ENCODE measurements at regions of chr4 and their contacts with region 1.

Region 1: DNA sequence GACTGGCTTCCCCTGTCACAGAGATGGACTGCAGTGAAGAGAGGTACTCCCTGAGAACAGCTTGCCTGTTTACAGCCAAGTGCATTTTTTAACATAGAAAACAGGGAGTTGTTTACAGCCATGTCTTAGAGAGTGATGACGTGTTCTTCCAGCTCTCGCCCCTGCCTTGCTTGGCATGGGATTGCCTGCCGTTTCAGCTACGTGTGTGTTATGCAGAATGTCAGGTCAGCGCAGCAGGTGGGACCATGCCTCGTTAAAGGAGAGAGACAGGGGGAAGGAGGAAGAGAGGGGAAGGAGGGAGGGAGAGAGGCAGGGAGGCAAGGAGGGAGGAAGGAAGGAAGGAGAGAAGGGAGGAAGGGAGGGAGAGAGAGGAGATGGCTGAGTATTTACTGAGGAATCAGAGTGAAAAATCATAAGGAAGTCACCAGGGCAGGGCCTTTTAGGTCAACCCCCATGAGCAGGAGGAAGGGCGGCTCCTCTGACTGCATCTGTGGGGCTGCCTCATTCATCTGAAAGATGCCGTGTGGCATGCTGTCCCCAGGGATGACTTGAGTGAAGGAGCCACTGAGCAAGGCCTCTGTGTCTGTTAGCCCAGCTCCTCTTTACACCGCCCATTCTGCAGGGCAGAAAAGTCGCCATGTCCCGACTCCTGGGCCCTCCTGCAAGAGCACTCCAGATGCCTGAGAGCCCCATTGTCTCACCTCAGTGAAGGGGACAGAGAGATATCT is 139.7 kb upstream of the PSAPL1 start:
- DNase-seq: no peak
- H3K27ac ChIP-seq: no peak overlapping the region
- CTCF ChIP-seq: no peak

Region 2: DNA sequence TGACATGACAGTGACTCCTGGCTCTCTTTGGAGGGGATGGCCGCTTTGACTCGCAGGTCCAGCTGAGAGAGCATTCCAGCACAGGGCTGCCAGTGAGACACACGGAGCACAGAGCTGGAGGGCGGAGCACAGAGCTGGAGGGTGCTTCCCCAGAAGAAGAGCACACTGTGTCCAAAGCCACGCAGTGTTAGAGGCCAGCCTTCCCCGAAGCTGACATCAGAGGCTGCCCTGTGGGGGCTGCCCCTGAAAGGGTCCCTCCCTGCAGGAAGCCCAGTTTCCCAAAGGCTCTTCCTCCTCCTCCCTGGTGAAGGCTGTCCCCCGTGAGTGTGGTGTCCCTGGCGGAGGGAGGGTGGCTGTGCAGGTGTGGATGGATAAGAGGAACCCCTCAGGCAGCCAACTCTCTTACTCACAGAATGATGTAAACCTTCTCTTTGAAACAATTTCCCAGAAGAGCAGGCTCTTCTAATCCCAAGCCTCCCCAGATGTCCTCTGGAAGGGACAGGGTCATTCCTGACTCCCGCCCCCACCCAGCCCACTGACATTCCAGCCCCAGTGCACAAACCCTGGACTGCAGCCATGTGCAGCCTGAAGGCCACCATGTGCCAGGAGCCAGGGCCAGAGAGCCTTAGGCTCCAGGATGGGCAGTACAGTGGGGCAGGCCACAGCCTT is 193.1 kb before region 1 on chr4:
- CTCF ChIA-PET with region 1: no interaction called
- POLR2A ChIA-PET with region 1: no interaction called
- DNase-seq: no peak
- H3K27ac ChIP-seq: peak overlapping the region; percentile 20
- CTCF ChIP-seq: no peak

Region 3: GRCh38 chr4:7537853-7538400 is 36.5 kb before region 1 on chr4:
- CTCF ChIA-PET with region 1: no interaction called
- POLR2A ChIA-PET with region 1: interaction called, 10 read pairs
- DNase-seq: no peak
- H3K27ac ChIP-seq: peak overlapping the region; percentile 91
- CTCF ChIP-seq: no peak

Region 4: DNA sequence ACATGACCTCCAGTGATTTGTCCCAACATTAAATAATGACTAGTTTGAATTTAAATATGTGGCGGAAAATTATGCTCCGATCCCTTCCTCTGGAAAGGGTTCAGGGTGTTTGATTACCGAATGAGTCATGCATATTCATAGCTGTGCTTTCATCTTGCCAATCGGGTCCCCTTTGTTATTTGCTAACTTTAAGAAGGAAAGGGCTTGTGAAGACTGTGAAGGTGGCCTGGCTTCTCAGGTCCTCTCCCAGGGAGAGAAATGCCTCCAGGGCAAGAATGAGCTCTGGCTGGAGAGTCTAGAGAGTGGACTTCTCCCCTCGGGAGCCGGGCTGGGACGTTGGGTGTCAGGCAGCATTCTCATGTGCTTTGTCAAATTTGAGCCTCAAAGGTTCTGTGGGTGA is 15.7 kb after region 1 on chr4:
- CTCF ChIA-PET with region 1: no interaction called
- POLR2A ChIA-PET with region 1: no interaction called
- DNase-seq: peak; percentile 36
- H3K27ac ChIP-seq: no peak overlapping the region
- CTCF ChIP-seq: no peak